AG04449 (cell line): ENCODE measurements at regions of chr10 and their contacts with region 1.

Region 1: DNA sequence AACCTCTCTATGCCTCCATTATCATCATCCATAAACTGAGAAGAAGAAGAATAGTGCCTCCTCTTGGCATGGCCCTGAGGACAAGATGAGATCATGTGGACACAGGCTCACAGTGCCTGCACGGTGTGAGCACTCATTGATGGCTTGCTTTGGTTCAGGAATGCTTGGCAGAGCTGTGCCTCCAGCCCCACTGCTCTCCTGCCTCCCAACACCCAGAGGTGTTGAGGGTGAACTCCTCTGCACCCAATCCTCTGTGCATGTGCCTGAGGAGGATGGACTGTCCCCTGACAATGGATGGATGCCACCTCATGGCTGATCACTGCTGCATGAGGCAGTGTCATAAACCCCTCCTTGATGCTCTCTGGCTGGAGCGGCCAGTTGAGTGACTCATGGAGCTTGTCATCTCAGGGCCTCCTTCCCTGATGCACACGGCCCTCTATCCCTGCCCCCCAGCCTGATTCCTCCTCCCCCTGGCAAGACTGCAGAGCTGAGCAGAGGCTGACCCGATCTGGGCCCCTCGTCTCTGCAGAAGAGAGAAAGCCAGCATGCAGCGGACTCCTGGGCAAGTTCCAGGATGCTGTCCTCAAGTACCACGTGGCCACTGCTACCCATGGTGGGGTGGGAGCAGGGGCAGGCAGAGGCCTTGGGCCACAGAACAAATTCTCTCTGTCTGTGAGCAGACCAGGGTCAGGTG is 136.3 kb downstream of the KCNMA1 start:
- DNase-seq: peak; percentile 82
- H3K4me3 ChIP-seq: no peak overlapping the region
- CTCF ChIP-seq: no peak

Region 2: DNA sequence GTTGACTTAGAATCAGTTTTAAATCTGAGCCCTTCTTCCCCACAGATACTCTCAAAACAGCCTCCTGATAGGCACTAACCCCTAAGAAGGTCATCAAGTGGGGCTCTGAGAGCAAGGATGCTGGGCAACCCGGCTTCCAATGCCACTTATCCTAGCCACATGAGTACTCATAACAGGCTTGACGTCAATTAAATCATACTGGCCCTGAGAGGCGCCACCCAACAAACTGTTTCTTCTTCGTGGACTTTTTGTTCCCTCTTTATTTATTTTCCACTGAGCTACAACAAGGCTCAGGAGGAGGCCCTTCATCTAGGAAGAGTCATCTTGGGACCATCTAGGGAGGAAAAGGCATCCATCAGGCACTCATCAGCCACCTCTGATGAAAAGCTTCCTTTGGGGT is 119.5 kb before region 1 on chr10:
- CTCF ChIA-PET with region 1: no interaction called
- POLR2A ChIA-PET with region 1: no interaction called
- DNase-seq: no peak
- H3K4me3 ChIP-seq: no peak overlapping the region
- CTCF ChIP-seq: no peak

Region 3: GRCh38 chr10:77524281-77524711 is 23.0 kb after region 1 on chr10:
- CTCF ChIA-PET with region 1: interaction called, 6 read pairs
- POLR2A ChIA-PET with region 1: interaction called, 20 read pairs
- DNase-seq: peak; percentile 92
- H3K4me3 ChIP-seq: peak overlapping the region; percentile 4; the same call in 1 of the 2 replicates
- CTCF ChIP-seq: no peak